Activated CD8-positive, alpha-beta T cell treated with anti-CD3 and anti-CD28 coated beads, Interleukin-2, amount 10 ng/mL, durations not matched to agents 7 days and 5 days (primary cell): ENCODE measurements at regions of chr17 and their contacts with region 1.

Region 1: GRCh38 chr17:76983075-76983775 is 115.0 kb downstream of the MGAT5B start:
- DNase-seq: no peak
- ATAC-seq: peak; percentile 20
- H3K4me3 Mint-ChIP-seq: no peak overlapping the region
- H3K27ac Mint-ChIP-seq: peak overlapping the region; percentile 63
- H3K4me1 Mint-ChIP-seq: peaks cover 19% of the 10 kb centered on the region
- H3K27me3 Mint-ChIP-seq: peaks cover under 1% of the 10 kb centered on the region

Region 2: GRCh38 chr17:76997981-76998531 is 14.8 kb after region 1 on chr17:
- CTCF ChIA-PET with region 1: interaction called, 3 read pairs
- POLR2A ChIA-PET with region 1: interaction called, 16 read pairs
- DNase-seq: peak; percentile 82
- ATAC-seq: peak; percentile 90
- H3K4me3 Mint-ChIP-seq: peak overlapping the region; percentile 55
- H3K27ac Mint-ChIP-seq: peak overlapping the region; percentile 93
- H3K4me1 Mint-ChIP-seq: peaks cover 59% of the 10 kb centered on the region
- H3K27me3 Mint-ChIP-seq: no peaks in the 10 kb centered on the region